Tibial artery (tissue), 4 donors: ENCODE measurements at regions of chr17 and their contacts with region 1.

Region 1: GRCh38 chr17:17812211-17813057 is 24.4 kb downstream of the SREBF1 start:
- DNase-seq: peak; percentile 70 to 84
- H3K4me3 ChIP-seq: no peak overlapping the region
- H3K27ac ChIP-seq: peak overlapping the region; percentile 10 to 11
- H3K4me1 ChIP-seq: peaks cover 0 to 62% (median 38%) of the 10 kb centered on the region in 4 donors
- H3K27me3 ChIP-seq: no peaks in the 10 kb centered on the region
- CTCF ChIP-seq: peak; percentile 99

Region 2: DNA sequence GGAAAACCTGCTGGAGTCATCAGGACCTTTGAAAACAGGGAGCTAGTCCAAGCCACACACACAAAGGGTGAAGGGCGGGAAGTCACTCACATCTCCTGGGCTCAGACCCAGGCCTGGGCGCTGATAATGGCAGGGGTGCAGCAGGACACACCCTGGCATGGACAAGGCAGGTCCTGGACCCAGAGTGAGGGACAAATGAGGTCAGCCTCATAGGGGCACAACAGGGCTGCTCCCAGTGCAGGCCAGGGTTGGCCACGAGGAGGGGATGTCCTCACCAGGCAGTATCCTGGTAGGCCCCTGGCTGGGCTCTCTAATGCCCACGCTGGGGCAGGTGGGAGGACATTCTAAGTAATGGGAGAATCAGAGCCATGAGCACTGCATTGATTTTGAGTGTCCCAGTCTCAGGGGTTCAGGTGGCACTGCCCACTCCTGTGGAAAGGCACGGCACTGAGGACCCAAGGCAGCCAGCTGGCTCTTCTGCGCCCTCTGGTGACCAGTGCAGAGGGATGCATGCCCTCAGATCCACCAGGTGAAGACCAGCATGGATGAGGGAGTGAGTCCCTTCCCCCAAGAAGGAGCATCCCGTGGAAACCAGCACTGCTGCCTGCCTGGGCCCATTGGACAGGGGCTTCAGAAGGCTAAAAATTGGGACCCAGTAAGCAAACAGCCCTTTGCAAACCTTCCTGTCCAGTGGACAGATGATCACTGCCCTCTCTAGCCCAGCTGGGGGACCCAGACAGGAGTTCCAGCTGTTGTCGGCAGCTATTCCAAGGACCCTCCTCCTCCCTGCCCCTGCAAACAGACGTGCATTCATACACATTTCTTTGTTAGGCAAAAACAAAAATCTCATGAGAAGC is 47.7 kb after region 1 on chr17:
- intact Hi-C with region 1: loop called (anchors 2 kb)
- DNase-seq: peak; percentile 45 to 83
- H3K4me3 ChIP-seq: no peak overlapping the region
- H3K27ac ChIP-seq: no peak overlapping the region
- H3K4me1 ChIP-seq: peaks cover 0 to 27% (median 25%) of the 10 kb centered on the region in 4 donors
- H3K27me3 ChIP-seq: no peaks in the 10 kb centered on the region
- CTCF ChIP-seq: peak; percentile 98 to 99

Region 3: DNA sequence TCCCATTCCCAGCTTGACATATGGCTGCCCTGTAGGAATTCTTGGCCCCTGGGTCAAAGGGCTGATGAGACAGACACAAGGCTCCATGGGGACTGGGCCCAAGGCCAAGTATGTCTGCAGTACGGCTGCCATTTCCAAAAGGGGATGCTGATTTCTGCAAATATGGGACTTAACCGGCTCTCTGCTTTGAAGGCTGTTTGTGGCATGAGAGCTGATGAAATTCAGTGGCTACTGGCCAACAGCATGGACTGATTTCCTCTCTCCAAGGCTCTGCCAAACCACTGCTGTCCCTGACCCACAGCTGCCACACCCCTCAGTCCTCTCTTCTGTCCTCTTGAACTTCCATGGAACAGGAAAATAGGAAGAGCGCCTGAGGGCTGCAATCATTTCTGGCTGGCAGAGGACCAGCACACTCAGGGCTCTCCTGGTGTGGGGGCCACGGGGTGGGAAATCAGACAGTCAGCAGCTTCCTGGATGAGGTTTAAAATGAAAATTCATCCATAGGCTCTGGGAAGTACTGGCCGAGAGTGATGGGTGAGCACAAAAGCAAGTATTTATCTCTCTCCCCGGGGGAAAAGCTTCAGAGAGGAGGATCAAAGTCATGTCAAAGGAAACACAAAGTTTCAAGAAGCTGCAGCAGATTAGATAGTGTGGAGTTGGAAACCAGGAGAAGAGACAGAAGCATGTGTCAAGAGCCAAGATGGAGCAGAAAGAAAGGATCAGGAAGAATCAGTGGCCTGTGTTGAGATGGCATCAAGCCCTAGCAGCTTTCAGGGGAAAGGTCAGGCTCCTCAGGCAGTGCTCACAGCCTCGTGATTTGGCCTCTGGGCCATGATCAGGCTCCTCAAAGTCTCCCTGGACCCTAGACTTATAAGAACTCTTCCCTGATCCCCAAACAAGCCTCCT is 88.4 kb after region 1 on chr17:
- intact Hi-C with region 1: no loop called
- DNase-seq: peak; percentile 93
- H3K4me3 ChIP-seq: no peak overlapping the region
- H3K27ac ChIP-seq: peak overlapping the region; percentile 20 to 63
- H3K4me1 ChIP-seq: peaks cover 0 to 42% (median 19%) of the 10 kb centered on the region in 4 donors
- H3K27me3 ChIP-seq: no peaks in the 10 kb centered on the region
- CTCF ChIP-seq: no peak

Region 4: GRCh38 chr17:17919169-17920107 is 107.0 kb after region 1 on chr17:
- intact Hi-C with region 1: loop called (anchors 5 kb)
- DNase-seq: peak; percentile 69 to 82
- H3K4me3 ChIP-seq: no peak overlapping the region
- H3K27ac ChIP-seq: no peak overlapping the region
- H3K4me1 ChIP-seq: peaks cover 0 to 41% (median 29%) of the 10 kb centered on the region in 4 donors
- H3K27me3 ChIP-seq: no peaks in the 10 kb centered on the region
- CTCF ChIP-seq: peak; percentile 74 to 76

Region 5: DNA sequence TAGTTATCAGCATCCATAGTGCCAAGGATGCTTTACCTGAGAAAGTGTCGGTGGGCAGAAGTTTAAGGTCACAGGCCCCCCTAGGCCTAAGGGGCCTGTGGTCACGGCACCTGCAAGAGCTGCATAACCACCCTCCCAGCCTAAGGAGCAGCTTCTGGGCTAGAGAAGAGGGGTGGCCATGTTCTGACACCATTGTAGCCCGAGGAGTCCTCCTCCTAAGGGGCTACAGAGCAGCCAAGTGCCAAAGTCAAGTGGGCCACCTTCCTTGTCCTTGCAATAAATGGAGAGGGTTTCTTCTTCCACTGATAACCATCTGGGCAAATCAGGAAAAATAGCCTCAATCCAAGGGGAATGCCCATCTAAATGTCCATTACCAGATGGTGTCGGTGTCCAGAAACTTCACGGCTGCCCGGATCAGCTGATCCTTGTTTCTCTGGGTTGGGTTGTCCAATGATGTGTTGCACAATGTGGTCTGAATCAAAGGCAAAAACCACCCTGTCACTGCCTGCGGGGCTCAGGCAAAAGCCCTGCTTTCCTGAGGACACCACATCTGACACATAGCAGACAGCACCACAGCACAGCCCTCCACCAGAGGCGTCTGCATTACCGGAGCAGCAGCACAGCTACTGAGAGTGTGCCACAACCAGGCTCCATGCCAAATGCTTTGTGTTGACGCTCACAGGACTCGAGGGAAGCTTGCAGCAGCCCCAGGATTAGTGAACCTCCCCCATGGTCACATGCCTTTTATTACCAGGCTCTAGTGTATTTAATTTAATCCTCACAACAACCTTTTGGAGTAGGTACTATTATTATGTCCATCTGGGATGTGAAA is 213.7 kb after region 1 on chr17:
- intact Hi-C with region 1: loop called (anchors 10 kb)
- DNase-seq: peak in 1 of 2 donors; percentile 54
- H3K4me3 ChIP-seq: no peak overlapping the region
- H3K27ac ChIP-seq: no peak overlapping the region
- H3K4me1 ChIP-seq: no peaks in the 10 kb centered on the region
- H3K27me3 ChIP-seq: no peaks in the 10 kb centered on the region
- CTCF ChIP-seq: no peak